Aorta (tissue), 5 donors: ENCODE measurements at regions of chr2 and their contacts with region 1.

Region 1: DNA sequence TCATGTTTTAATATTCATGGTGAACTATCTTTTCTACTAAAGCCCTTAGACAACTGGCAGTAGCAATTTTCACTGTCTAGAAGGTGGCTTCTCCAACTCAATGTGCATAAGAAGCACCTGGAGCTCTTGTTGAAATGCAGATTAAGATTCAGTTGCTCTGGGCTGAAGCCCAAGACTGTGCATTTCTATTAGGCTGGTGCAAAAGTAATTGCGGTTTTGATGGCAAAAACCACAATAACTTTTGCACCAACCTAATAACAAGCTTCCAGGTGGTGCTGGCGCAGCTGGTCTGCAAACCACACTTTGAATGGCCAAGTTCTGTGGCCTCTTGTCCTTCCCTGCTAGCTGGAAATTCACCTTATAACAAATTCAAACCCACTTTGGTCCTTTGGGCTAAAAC is 26.7 kb upstream of the VPS54 start:
- DNase-seq: no peak
- ATAC-seq: no peak
- H3K4me3 ChIP-seq: no peak overlapping the region
- H3K27ac ChIP-seq: no peak overlapping the region
- H3K4me1 ChIP-seq: no peaks in the 10 kb centered on the region
- H3K27me3 ChIP-seq: no peaks in the 10 kb centered on the region

Region 2: GRCh38 chr2:64144057-64145013 is 98.4 kb after region 1 on chr2 and contains the start of gene PELI1:
- intact Hi-C with region 1: loop called in 1 of 2 experiments (anchors 5 kb)
- DNase-seq: peak; percentile 96 to 99
- ATAC-seq: peak; percentile 100
- H3K4me3 ChIP-seq: peak within 1 kb of the TSS; percentile 83 to 98
- H3K27ac ChIP-seq: peak within 1 kb of the TSS; percentile 95 to 99
- H3K4me1 ChIP-seq: no peaks in the 10 kb centered on the region
- H3K27me3 ChIP-seq: no peaks in the 10 kb centered on the region
- total RNA-seq, gene PELI1: 36.7 to 38.0 TPM

Region 3: DNA sequence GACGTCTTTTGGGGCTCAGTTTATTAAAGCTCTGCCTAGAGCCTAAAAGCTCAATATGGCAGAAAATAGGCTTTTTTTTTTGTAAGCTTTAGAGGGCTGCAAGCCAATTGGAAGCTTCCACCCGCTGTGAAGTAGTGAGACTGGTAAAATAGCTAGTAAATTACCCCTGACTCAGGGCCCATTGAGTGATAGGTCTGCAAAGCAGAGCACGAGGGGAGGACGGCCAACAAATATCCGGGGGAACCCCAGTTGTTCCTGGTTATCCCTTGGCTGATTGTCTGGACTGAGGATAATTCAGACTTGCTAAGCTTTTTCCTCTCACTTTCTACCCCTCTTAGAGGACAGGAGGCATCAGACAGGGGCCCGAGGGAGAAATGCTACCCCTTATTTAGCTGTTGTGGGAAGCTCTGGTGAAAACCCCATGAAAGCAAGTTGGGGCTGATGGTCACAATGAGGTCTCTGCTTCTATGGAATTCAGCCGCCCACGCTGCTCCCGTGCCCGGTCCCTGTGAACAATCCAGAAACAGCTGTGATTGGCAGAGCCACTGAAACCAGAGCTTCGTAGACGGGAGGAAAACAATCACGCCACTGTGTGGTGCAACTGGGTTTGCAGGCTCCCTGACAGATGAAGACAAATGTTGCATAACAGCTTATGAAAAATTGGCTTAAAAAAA is 266.1 kb after region 1 on chr2:
- intact Hi-C with region 1: loop called in 1 of 2 experiments (anchors 5 kb)
- DNase-seq: peak; percentile 84 to 86
- ATAC-seq: peak; percentile 86
- H3K4me3 ChIP-seq: peak overlapping the region in 1 of 2 donors; percentile 11
- H3K27ac ChIP-seq: peak overlapping the region in 1 of 2 donors; percentile 83
- H3K4me1 ChIP-seq: peaks cover 0 to 4% of the 10 kb centered on the region in 2 donors
- H3K27me3 ChIP-seq: no peaks in the 10 kb centered on the region

Region 4: GRCh38 chr2:64488050-64488974 is 442.4 kb after region 1 on chr2:
- intact Hi-C with region 1: loop called (anchors 5 to 10 kb)
- DNase-seq: peak; percentile 71 to 90
- ATAC-seq: peak; percentile 76
- H3K4me3 ChIP-seq: no peak overlapping the region
- H3K27ac ChIP-seq: no peak overlapping the region
- H3K4me1 ChIP-seq: peaks cover 0 to 2% of the 10 kb centered on the region in 2 donors
- H3K27me3 ChIP-seq: no peaks in the 10 kb centered on the region